ENCODE measurements at regions of chr17 and their contacts with region 1.

Region 1: GRCh38 chr17:35747540-35748017 is 5.5 kb downstream of the GAS2L2 start:
- DNase-seq: peak in 4 of 5 donors; percentile 64 to 71 (median 68)
- ATAC-seq: peak; percentile 67 to 89 (median 80)
- H3K4me3 ChIP-seq: no peak overlapping the region
- H3K27ac ChIP-seq: no peak overlapping the region
- H3K4me1 ChIP-seq: peaks cover 0 to 9% (median 4%) of the 10 kb centered on the region in 12 donors
- H3K27me3 ChIP-seq: peaks cover 0 to 46% (median 20%) of the 10 kb centered on the region in 9 donors
- CTCF ChIP-seq: peak; percentile 75 to 91 (median 87)
- POLR2A ChIP-seq: no peak

Region 2: GRCh38 chr17:35161281-35161761 is 586.3 kb before region 1 on chr17:
- intact Hi-C with region 1: loop called in 2 of 10 experiments (anchors 10 kb)
- DNase-seq: no peak
- ATAC-seq: peak in 1 of 4 donors; percentile 18
- H3K4me3 ChIP-seq: no peak overlapping the region
- H3K27ac ChIP-seq: peak overlapping the region in 1 of 12 donors; percentile 70
- H3K4me1 ChIP-seq: peaks cover 0 to 17% (median 0%) of the 10 kb centered on the region in 12 donors
- H3K27me3 ChIP-seq: no peaks in the 10 kb centered on the region
- CTCF ChIP-seq: no peak
- POLR2A ChIP-seq: no peak

Region 3: GRCh38 chr17:35170968-35171771 is 576.4 kb before region 1 on chr17:
- intact Hi-C with region 1: loop called in 7 of 10 experiments (anchors 5 to 10 kb)
- DNase-seq: no peak
- ATAC-seq: peak in 2 of 4 donors; percentile 14 to 23
- H3K4me3 ChIP-seq: no peak overlapping the region
- H3K27ac ChIP-seq: no peak overlapping the region
- H3K4me1 ChIP-seq: peaks cover 0 to 11% (median 0%) of the 10 kb centered on the region in 12 donors
- H3K27me3 ChIP-seq: no peaks in the 10 kb centered on the region
- CTCF ChIP-seq: peak in 9 of 12 donors; percentile 13 to 53 (median 33)
- POLR2A ChIP-seq: no peak

Region 4: GRCh38 chr17:35612924-35613521 is 134.6 kb before region 1 on chr17:
- intact Hi-C with region 1: loop called (anchors 1 to 5 kb)
- DNase-seq: peak in 2 of 5 donors; percentile 17 to 38
- ATAC-seq: peak in 1 of 4 donors; percentile 38
- H3K4me3 ChIP-seq: no peak overlapping the region
- H3K27ac ChIP-seq: no peak overlapping the region
- H3K4me1 ChIP-seq: peaks cover 0 to 23% (median 7%) of the 10 kb centered on the region in 12 donors
- H3K27me3 ChIP-seq: no peaks in the 10 kb centered on the region
- CTCF ChIP-seq: peak; percentile 19 to 69 (median 58)
- POLR2A ChIP-seq: no peak

Region 5: DNA sequence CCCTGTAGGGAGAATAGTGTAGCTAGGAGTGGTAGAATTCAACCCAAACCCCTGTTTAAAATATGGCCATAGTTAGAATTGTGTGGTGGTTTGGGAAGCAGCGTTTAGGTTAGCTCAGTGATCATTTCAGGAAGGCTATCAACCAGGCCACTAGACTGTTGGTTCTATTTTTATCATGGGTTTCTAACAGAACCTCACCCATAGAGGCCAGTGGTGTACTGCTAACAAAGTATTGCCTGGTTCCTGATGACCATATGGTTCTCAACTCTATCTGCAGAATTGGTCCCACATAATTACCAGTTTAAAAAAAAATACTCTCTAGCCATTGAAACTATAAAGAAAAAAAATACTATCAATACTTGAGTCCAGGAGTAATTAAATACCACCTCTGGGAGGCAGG is 86.7 kb before region 1 on chr17:
- intact Hi-C with region 1: loop called (anchors 1 to 10 kb)
- DNase-seq: peak in 1 of 5 donors; percentile 10
- ATAC-seq: peak; percentile 81 to 93 (median 92)
- H3K4me3 ChIP-seq: no peak overlapping the region
- H3K27ac ChIP-seq: peak overlapping the region in 1 of 12 donors; percentile 25
- H3K4me1 ChIP-seq: peaks cover 0 to 8% (median 0%) of the 10 kb centered on the region in 12 donors
- H3K27me3 ChIP-seq: no peaks in the 10 kb centered on the region
- CTCF ChIP-seq: peak in 10 of 12 donors; percentile 19 to 52 (median 40)
- POLR2A ChIP-seq: no peak

Region 6: GRCh38 chr17:35666967-35667532 is 80.5 kb before region 1 on chr17:
- intact Hi-C with region 1: loop called in 4 of 10 experiments (anchors 5 to 10 kb)
- DNase-seq: no peak
- ATAC-seq: no peak
- H3K4me3 ChIP-seq: no peak overlapping the region
- H3K27ac ChIP-seq: no peak overlapping the region
- H3K4me1 ChIP-seq: peaks cover 0 to 11% (median 0%) of the 10 kb centered on the region in 12 donors
- H3K27me3 ChIP-seq: no peaks in the 10 kb centered on the region
- CTCF ChIP-seq: no peak
- POLR2A ChIP-seq: no peak

Region 7: GRCh38 chr17:35764123-35764991 is 16.8 kb after region 1 on chr17:
- intact Hi-C with region 1: no loop called
- DNase-seq: peak; percentile 83 to 94 (median 85)
- ATAC-seq: peak; percentile 75 to 98 (median 95)
- H3K4me3 ChIP-seq: peak overlapping the region; percentile 9 to 67 (median 57)
- H3K27ac ChIP-seq: peak overlapping the region in 4 of 12 donors; percentile 3 to 42 (median 12)
- H3K4me1 ChIP-seq: peaks cover 0 to 15% (median 9%) of the 10 kb centered on the region in 12 donors
- H3K27me3 ChIP-seq: no peaks in the 10 kb centered on the region
- CTCF ChIP-seq: peak; percentile 85 to 98 (median 96)
- POLR2A ChIP-seq: peak in 1 of 2 donors; percentile 21

Region 8: GRCh38 chr17:35915153-35915969 is 167.8 kb after region 1 on chr17:
- intact Hi-C with region 1: no loop called
- DNase-seq: no peak
- ATAC-seq: no peak
- H3K4me3 ChIP-seq: no peak overlapping the region
- H3K27ac ChIP-seq: no peak overlapping the region
- H3K4me1 ChIP-seq: peaks cover 0 to 3% (median 0%) of the 10 kb centered on the region in 12 donors
- H3K27me3 ChIP-seq: no peaks in the 10 kb centered on the region
- CTCF ChIP-seq: no peak
- POLR2A ChIP-seq: no peak